Calu3 (cell line): ENCODE measurements at regions of chr1 and their contacts with region 1.

Region 1: GRCh38 chr1:165073185-165074007 is 283.1 kb downstream of the LMX1A start:
- DNase-seq: peak; percentile 47
- H3K4me3 Mint-ChIP-seq: no peak overlapping the region
- H3K27ac Mint-ChIP-seq: no peak overlapping the region
- H3K4me1 Mint-ChIP-seq: no peaks in the 10 kb centered on the region
- H3K27me3 Mint-ChIP-seq: peaks cover 23% of the 10 kb centered on the region
- CTCF ChIP-seq: peak; percentile 60

Region 2: DNA sequence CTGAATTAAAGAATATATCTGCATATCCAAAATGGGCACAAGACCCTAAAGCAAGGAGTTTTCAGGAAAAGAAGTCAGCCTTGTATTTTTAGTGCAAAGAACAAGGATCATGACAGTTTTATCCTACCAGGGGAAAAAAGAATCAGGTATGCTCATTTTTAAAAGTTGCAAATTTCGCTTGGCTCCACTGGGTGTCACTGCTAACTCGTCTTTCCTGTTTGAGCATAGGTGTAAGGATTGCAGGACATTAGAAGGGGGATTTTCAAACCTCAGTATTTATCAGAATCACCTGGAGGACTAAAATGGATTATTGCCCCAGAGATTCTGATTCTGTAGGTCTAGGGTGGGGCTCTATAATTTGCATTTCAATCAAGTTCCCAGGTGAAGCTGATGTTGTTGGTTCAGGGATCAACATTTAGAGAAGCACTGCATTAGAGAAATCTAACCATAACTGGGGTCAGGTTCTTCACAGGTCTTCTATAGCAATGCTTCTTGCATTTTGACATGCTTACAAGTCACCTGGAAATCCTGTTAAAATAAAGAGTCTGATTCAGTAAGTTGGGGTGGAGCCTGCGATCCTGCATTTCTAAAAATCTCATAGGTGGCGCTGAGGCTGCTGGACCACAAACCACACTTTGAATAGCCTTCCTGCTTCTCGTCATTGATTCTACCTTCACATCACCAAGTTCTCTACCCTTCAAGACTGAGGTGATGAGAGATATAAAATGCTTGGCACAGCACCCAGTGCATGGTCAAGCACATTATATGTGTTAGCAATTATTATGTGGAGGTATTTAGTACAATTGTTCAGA is 1712.1 kb before region 1 on chr1:
- CTCF ChIA-PET with region 1: interaction called, 7 read pairs
- intact Hi-C with region 1: loop called (anchors 1 kb)
- DNase-seq: peak; percentile 42
- H3K4me3 Mint-ChIP-seq: no peak overlapping the region
- H3K27ac Mint-ChIP-seq: no peak overlapping the region
- H3K4me1 Mint-ChIP-seq: no peaks in the 10 kb centered on the region
- H3K27me3 Mint-ChIP-seq: peaks cover 37% of the 10 kb centered on the region
- CTCF ChIP-seq: peak; percentile 57

Region 3: DNA sequence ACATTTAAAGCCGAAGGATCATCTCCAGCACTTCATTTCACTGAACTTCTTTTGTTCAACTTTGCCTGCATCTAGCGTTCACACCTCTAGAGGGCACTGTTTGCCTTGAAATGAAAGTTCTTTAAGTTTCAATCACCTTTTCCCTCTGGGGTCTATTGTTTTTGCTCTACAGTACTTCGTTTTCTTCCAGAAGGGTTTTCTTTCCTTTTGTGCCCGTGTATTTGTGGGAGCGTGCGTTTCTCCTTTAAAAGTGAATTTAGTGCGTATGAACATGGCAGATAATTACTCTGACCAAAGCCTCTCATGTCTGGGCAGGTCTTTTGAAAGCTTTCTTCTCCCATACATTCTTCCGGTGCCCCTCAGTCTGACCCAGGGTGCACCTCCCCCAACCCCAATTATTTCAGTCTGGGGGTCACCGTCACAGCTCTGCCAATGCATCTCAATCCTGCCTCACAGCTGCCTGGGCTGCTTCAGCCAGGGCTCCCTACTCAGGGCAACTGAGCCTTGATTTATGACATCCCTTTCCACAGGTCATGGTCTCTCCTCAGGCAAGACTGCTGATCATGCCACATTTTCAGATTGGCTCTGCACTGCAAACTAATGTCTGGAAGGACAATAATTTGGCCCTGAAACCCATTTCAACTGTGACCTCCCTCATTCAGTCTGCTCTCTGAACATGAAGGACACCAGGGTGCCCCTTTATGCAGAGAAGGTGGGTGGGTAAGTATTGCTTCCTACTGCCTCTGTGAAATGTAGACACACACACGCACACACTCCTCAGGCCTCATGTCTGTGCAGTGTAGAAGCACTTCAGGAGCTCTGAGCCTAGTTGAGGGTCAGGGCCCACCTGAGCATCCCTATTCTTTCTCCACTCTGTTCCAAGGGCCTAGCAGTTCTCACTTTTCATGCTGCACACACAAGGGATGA is 1663.1 kb before region 1 on chr1:
- CTCF ChIA-PET with region 1: no interaction called
- intact Hi-C with region 1: loop called (anchors 2 kb)
- DNase-seq: peak; percentile 65
- H3K4me3 Mint-ChIP-seq: no peak overlapping the region
- H3K27ac Mint-ChIP-seq: no peak overlapping the region
- H3K4me1 Mint-ChIP-seq: peaks cover 8% of the 10 kb centered on the region
- H3K27me3 Mint-ChIP-seq: peaks cover 38% of the 10 kb centered on the region
- CTCF ChIP-seq: peak; percentile 80

Region 4: DNA sequence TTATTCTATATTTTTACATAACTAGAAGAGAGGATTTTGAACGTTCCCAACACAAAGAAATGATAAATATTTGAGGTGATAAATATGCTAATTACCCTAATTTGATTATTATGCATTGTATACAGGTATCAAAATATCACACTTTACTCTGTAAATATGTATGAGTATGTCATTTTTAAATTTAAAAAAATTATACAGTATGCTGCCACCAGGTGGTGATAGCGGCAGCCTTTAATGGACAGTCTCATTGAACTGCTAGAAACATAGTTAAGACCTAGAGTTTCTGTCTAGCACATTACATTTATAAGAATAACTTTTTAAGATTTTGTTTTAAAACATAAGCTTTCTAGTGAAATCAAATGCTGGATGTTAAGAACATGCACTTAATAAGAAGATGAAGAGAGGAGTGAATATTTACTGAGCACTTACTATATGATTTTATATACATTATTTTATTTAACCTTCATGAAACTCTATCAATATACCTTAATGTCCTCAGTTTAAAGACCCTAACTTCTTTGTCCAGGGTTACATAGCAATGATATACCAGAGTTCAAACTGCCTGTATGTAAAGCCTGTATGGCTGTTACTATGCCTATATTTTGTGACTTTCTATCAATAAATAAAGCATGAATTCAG is 1544.6 kb before region 1 on chr1:
- CTCF ChIA-PET with region 1: interaction called, 3 read pairs
- intact Hi-C with region 1: loop called (anchors 1 kb)
- DNase-seq: peak; percentile 48
- H3K4me3 Mint-ChIP-seq: no peak overlapping the region
- H3K27ac Mint-ChIP-seq: no peak overlapping the region
- H3K4me1 Mint-ChIP-seq: no peaks in the 10 kb centered on the region
- H3K27me3 Mint-ChIP-seq: peaks cover 17% of the 10 kb centered on the region
- CTCF ChIP-seq: no peak

Region 5: DNA sequence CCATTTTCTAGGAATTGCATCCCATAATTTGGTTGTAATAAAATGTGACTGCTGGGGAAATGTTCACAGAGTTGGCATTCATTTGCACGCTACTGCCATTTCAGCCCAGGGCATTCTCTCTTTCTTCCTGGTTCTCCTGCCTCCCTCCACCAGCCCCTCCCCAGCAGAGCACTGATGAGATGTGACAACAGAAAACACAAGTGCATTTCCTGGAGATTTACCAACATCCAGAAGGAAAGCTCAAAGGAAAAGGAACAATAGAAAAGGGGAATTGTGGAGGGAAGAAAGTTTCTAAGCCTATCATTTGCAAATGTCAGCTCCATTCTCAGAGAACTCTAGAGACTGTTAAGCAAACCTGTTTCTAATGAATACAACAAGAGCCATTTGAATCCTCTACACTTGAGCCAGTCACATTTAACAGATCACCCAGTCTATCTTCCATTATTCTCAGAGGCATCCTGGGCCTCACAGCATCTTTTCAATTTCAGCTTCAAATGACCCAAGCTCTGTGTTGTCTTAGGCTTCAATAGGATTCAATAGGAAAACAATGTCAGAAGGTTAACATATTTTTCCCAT is 910.0 kb before region 1 on chr1:
- CTCF ChIA-PET with region 1: no interaction called
- intact Hi-C with region 1: loop called (anchors 2 kb)
- DNase-seq: no peak
- H3K4me3 Mint-ChIP-seq: no peak overlapping the region
- H3K27ac Mint-ChIP-seq: no peak overlapping the region
- H3K4me1 Mint-ChIP-seq: no peaks in the 10 kb centered on the region
- H3K27me3 Mint-ChIP-seq: no peaks in the 10 kb centered on the region
- CTCF ChIP-seq: no peak

Region 6: DNA sequence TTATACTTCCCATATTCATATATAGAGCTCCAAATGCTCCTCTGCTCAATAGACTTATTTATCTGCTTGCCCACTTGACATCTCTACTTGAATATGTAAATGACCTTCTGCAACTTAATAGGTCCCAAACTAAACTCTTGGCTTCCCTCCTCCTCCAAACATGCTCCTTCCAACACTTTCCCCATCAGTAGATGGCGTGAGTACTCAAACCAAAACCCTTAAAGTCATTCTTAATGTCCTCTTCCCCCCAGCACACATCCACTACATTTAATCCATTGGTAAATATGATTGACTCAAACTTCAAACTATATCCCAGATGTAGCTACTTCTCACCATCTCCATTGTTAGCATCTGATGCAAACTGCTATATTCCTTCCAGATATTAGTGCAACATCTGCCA is 563.0 kb before region 1 on chr1:
- CTCF ChIA-PET with region 1: no interaction called
- intact Hi-C with region 1: loop called (anchors 10 kb)
- DNase-seq: no peak
- H3K4me3 Mint-ChIP-seq: no peak overlapping the region
- H3K27ac Mint-ChIP-seq: no peak overlapping the region
- H3K4me1 Mint-ChIP-seq: no peaks in the 10 kb centered on the region
- H3K27me3 Mint-ChIP-seq: peaks cover 6% of the 10 kb centered on the region
- CTCF ChIP-seq: no peak

Region 7: GRCh38 chr1:164836614-164837018 is 236.8 kb before region 1 on chr1:
- CTCF ChIA-PET with region 1: no interaction called
- intact Hi-C with region 1: no loop called
- DNase-seq: no peak
- H3K4me3 Mint-ChIP-seq: no peak overlapping the region
- H3K27ac Mint-ChIP-seq: no peak overlapping the region
- H3K4me1 Mint-ChIP-seq: no peaks in the 10 kb centered on the region
- H3K27me3 Mint-ChIP-seq: no peaks in the 10 kb centered on the region
- CTCF ChIP-seq: no peak

Region 8: GRCh38 chr1:164969253-164969652 is 104.1 kb before region 1 on chr1:
- CTCF ChIA-PET with region 1: no interaction called
- intact Hi-C with region 1: no loop called
- DNase-seq: no peak
- H3K4me3 Mint-ChIP-seq: no peak overlapping the region
- H3K27ac Mint-ChIP-seq: no peak overlapping the region
- H3K4me1 Mint-ChIP-seq: no peaks in the 10 kb centered on the region
- H3K27me3 Mint-ChIP-seq: no peaks in the 10 kb centered on the region
- CTCF ChIP-seq: no peak

Region 9: GRCh38 chr1:165116732-165117131 is 43.3 kb after region 1 on chr1:
- CTCF ChIA-PET with region 1: no interaction called
- intact Hi-C with region 1: no loop called
- DNase-seq: peak; percentile 35
- H3K4me3 Mint-ChIP-seq: no peak overlapping the region
- H3K27ac Mint-ChIP-seq: no peak overlapping the region
- H3K4me1 Mint-ChIP-seq: peaks cover 7% of the 10 kb centered on the region
- H3K27me3 Mint-ChIP-seq: peaks cover 78% of the 10 kb centered on the region
- CTCF ChIP-seq: no peak